RWPE1 (cell line): ENCODE measurements at regions of chr5 and their contacts with region 1.

Region 1: DNA sequence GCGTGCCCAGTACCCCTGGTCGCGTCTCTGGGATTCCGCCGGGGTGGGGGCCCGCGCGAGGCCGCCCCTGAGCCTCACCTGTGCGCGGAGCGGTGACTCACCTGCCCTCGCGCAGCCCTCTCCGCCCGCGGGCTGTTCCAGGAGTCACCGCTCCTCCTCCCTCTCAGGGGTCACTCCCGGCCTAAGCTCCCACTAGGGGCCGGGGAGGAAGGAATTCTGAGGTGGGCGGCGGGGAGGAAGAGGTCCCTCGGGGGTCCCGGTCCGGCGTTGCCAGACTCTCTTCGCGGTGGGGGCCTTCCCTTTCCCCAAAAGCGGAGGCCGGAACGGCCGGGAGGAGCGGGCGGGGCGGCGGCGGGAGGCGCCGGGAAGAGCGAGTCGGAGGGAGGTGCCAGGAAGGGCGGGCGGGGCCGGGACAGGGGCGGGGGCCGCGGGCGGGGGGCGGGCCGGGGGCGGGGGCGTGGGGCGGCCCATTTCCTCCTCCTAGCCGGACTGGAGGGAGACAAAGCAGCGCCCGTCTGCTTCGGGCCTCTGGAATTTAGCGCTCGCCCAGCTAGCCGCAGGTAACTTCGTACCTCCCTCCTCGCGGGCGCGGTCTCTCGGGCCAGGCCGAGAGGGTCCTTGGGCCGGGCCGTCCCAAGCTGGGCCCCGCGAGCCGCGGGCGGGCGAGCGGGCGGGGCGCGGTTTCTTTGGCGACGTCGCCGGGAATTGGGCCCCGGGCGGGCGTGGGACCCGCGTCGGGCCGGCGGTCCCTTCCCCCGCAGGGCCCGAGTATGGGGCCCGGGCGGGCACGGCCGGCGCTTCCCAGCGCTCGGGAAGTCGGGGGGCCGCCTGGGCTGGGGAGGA is at the start of gene CTNNA1:
- DNase-seq: peak; percentile 96
- H3K27ac ChIP-seq: peak within 1 kb of the TSS; percentile 97
- CTCF ChIP-seq: no peak

Region 2: DNA sequence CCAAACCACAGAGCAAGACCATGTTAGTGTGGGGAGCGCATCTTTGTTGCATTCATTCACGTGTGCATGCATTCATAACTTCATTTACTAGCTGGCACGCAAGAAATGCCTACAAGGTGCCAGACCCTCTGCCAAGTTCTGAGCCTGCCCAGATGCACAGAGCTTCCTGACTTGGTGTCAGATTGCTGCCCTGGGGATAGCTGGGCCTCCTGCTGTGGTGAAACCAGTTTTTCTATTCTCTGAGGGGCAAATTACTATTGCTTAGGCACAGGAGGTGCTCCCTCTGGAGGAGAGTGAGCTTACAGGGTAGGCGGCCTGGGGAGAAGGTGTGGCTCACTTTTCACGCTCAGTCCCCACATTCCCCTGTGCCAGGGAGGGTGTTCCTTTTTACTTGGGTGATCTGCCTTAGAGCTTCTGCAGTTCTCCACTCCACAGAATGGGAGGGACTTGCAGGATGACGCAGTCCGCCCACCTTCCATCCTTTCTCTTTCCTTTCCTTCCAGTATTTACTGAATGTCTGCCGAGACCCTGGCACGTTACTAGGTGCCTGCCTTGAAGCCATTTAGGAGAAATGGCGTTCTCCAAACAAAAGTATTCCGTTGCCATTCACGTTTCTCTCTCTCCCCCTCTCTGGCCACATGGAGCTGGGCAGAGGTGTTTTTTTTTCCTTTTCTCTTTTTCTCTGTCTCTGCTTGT is 27.9 kb before region 1 on chr5:
- CTCF ChIA-PET with region 1: interaction called, 10 read pairs
- POLR2A ChIA-PET with region 1: interaction called, 5 read pairs
- DNase-seq: peak; percentile 92
- H3K27ac ChIP-seq: peak overlapping the region; percentile 63
- CTCF ChIP-seq: no peak; the same call in 1 of the 2 replicates